H1 (cell line): ENCODE measurements at regions of chr11 and their contacts with region 1.

Region 1: GRCh38 chr11:126480410-126481302 is 125.2 kb downstream of the ST3GAL4 start:
- DNase-seq: peak; percentile 77 to 80
- H3K4me3 ChIP-seq: peak overlapping the region in 1 of 4 experiments; percentile 20; a peak in 1 of 8 replicates
- H3K27ac ChIP-seq: peak overlapping the region; percentile 72; the same call in 1 of the 2 replicates
- H3K4me1 ChIP-seq: peaks cover 0 to 6% (median 2%) of the 10 kb centered on the region in 4 experiments; a peak in 6 of 7 replicates
- H3K27me3 ChIP-seq: no peaks in the 10 kb centered on the region
- CTCF ChIP-seq: peak; percentile 59 to 94 (median 85)
- EP300 ChIP-seq: 0 out of 3 replicates have a peak, but pooled peaks of 1 of the 2 experiments have one; percentile 41
- POLR2A ChIP-seq: peak in 1 of 2 experiments; percentile 78; a peak in 2 of 3 replicates
- RAD21 ChIP-seq: peak; percentile 72 to 78

Region 2: DNA sequence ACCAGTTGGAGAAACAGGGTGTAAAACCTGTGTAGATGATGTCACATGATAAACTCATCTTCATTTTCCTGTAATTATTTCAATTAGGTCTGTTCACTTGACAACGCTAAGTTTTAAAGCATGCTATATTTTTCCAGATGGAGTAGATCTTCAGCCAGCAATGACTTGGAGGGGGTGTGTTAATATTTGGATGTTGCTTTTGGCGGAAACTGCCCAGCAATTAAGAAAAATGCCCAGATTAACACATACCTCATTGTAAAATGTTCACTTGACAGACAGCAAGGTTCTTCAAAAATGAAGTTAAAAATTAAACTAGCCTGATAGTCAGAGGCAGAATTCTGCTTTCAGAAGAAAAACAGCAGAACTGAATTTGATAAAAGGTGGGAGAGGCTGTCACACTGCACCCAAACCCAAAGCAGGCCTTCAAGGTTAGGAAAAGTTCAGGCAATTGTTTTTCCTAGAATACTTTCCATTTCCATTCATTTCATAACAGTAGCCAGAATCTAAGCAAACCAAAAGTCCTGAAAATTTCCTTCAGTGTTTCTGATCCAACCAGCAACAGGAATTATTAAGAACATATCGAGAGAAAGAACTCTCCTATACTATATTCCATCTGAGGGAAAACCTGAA is 501.8 kb before region 1 on chr11:
- CTCF ChIA-PET with region 1: no interaction called
- POLR2A ChIA-PET with region 1: no interaction called
- DNase-seq: no peak
- H3K4me3 ChIP-seq: no peak overlapping the region
- H3K27ac ChIP-seq: no peak overlapping the region
- H3K4me1 ChIP-seq: peaks cover 0 to 3% (median 0%) of the 10 kb centered on the region in 4 experiments; a peak in 2 of 7 replicates
- H3K27me3 ChIP-seq: no peaks in the 10 kb centered on the region
- CTCF ChIP-seq: no peak
- EP300 ChIP-seq: no peak
- POLR2A ChIP-seq: no peak
- RAD21 ChIP-seq: no peak

Region 3: DNA sequence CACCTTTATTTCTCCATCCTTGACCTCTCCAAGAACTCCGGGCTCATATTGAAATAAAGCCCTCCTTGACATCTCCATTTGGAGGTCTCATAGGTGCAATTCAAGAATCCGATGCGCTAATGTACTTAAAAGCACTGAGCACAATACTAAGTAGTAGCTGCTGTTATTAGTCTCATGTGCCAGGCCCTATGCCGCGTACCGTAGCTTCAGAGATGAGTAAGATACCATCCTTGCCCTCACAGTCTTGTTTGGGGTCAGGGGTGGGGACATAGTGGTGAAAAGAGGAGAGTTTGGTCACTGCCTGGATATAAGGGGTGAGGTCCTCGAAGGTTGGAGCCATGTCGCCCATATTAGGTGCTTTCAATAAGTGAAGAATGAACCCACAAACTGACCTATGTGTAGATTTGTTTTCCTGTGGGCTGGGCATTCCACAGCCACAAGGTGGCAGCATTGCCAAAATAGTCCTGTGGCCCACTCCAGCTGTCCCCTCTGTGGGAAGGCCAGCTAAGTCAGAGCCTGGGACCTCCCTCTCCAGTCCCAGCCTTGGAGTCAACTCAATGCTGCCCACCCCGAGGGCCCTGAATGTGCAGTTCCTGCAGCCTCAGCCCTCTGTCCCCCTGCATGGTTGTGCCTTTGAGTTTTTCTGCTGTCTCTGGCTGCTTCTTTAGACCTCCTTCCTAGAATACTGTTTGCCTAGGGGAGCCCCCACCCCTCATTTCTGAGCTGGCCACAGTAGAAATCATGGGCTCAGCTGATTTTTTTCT is 170.2 kb before region 1 on chr11:
- CTCF ChIA-PET with region 1: interaction called, 24 read pairs
- POLR2A ChIA-PET with region 1: no interaction called
- DNase-seq: peak; percentile 47 to 82
- H3K4me3 ChIP-seq: no peak overlapping the region
- H3K27ac ChIP-seq: no peak overlapping the region
- H3K4me1 ChIP-seq: no peaks in the 10 kb centered on the region
- H3K27me3 ChIP-seq: no peaks in the 10 kb centered on the region
- CTCF ChIP-seq: peak; percentile 78 to 88 (median 85)
- EP300 ChIP-seq: no peak
- POLR2A ChIP-seq: no peak
- RAD21 ChIP-seq: peak; percentile 92 to 93

Region 4: DNA sequence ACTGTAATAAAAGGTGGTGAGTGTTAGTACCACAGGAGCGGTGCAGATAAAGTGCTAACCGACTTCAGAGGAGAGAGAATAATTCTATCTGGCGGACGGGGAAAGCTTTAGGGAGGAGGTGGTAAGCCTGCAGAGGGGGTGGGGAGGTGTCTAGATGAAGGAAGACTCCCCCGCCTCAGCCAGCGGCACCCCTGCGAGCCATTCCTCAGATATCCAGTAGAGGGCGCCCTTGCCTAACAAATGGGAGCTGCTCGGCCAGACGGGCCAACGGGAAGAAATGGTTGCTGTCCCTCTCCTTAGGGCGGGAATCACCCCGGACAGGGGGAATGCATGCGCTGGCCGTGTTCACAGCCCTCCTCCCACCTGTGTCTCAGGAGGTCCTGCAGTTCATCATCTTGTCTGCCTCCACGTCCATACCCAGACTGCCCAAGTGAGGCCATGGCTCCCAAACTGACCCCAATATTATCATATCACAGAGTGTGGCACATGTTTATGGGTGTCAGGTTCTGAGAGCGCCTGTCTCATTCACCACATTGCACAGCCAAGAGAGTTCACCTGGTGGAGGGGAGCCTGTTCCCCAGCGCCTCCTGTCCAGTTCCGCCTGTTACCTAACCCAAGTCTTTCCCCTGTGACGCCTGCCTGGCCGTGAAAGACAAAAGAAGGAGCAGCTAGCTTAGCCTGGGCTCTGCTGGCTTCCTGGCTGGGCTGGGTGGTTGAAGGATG is 39.7 kb before region 1 on chr11:
- CTCF ChIA-PET with region 1: interaction called, 54 read pairs
- POLR2A ChIA-PET with region 1: interaction called, 3 read pairs
- DNase-seq: peak; percentile 64 to 98
- H3K4me3 ChIP-seq: peak overlapping the region in 1 of 4 experiments; percentile 13; a peak in 1 of 8 replicates
- H3K27ac ChIP-seq: no peak overlapping the region
- H3K4me1 ChIP-seq: peaks cover 4 to 11% (median 8%) of the 10 kb centered on the region in 4 experiments; a peak in 5 of 7 replicates
- H3K27me3 ChIP-seq: no peaks in the 10 kb centered on the region
- CTCF ChIP-seq: peak; percentile 91 to 96 (median 93)
- EP300 ChIP-seq: no peak
- POLR2A ChIP-seq: no peak
- RAD21 ChIP-seq: peak; percentile 100

Region 5: DNA sequence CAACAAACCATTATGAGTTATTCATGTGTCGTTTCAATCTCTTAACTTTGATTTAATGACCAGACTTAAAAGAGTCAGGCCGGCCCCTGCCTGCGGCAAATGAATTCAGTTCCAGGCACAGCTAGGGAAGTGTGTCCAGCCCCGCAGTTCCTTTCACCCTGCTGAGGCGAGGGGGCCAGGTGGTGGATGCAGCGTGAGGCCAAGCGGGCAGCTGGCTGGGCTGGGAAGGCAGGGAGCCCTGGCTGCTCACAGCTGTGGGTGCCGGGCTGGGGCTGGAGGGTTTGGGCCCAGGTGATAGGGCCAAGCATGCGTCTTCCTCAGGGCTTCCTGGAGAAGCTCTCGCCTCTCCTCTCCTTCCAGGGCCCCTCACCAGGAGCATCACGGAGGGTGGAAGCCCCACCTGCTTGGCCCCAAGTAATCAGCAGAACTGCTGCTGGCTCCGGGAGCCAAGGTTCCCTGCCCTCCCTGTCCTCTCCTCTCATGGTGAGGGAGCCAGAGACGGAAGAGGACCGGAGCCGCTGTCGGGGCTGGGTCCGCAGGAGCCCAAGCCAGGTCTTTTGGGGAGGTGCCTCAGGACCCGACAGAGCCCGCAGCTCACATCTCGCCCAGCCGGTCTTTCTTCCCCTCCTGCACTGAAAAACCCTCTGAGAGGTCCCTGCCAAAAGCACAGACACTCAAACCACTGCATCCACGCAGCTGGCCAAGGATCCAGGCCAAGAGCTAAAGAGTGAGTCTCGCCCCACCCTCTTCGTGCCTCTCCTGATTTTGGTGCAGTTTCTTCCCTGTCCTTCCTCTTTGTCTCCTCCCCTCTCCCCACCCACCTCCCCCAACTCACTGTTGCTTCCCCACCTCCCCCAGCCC is 28.2 kb before region 1 on chr11:
- CTCF ChIA-PET with region 1: interaction called, 25 read pairs
- POLR2A ChIA-PET with region 1: interaction called, 3 read pairs
- DNase-seq: no peak
- H3K4me3 ChIP-seq: no peak overlapping the region
- H3K27ac ChIP-seq: no peak overlapping the region
- H3K4me1 ChIP-seq: peaks cover 0 to 6% (median 0%) of the 10 kb centered on the region in 4 experiments; a peak in 1 of 7 replicates
- H3K27me3 ChIP-seq: no peaks in the 10 kb centered on the region
- CTCF ChIP-seq: no peak
- EP300 ChIP-seq: no peak
- POLR2A ChIP-seq: no peak
- RAD21 ChIP-seq: no peak

Region 6: DNA sequence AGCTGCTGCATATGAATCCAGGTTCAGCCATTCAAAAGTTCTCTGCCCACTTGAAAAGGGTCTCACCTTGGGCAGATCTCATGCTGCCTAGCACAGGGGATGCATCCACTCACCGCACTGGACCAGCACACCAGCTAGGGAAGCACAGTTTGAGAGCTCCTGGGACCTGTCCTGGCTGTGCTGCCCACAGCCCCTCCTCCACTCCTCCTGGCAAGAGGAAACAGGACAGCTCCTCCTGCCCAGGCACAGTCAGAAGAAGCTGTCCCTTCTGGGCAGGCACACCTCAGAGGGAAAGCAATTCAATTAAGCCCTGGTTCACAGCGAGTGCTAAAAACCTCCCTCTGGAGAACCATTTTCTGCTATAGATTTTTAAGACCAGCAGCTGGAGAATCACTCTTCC is 21.5 kb after region 1 on chr11:
- CTCF ChIA-PET with region 1: interaction called, 18 read pairs
- POLR2A ChIA-PET with region 1: interaction called, 4 read pairs
- DNase-seq: no peak
- H3K4me3 ChIP-seq: no peak overlapping the region
- H3K27ac ChIP-seq: no peak overlapping the region
- H3K4me1 ChIP-seq: peaks cover 2 to 22% (median 6%) of the 10 kb centered on the region in 4 experiments
- H3K27me3 ChIP-seq: no peaks in the 10 kb centered on the region
- CTCF ChIP-seq: no peak
- EP300 ChIP-seq: no peak
- POLR2A ChIP-seq: no peak
- RAD21 ChIP-seq: no peak

Region 7: GRCh38 chr11:126573325-126574076 is 92.8 kb after region 1 on chr11:
- CTCF ChIA-PET with region 1: interaction called, 12 read pairs
- POLR2A ChIA-PET with region 1: no interaction called
- DNase-seq: no peak
- H3K4me3 ChIP-seq: no peak overlapping the region
- H3K27ac ChIP-seq: no peak overlapping the region
- H3K4me1 ChIP-seq: peaks cover 0 to 5% (median 2%) of the 10 kb centered on the region in 4 experiments; a peak in 3 of 7 replicates
- H3K27me3 ChIP-seq: no peaks in the 10 kb centered on the region
- CTCF ChIP-seq: peak; percentile 51 to 66 (median 65)
- EP300 ChIP-seq: no peak
- POLR2A ChIP-seq: no peak
- RAD21 ChIP-seq: peak; percentile 78 to 86

Region 8: GRCh38 chr11:126628790-126629621 is 148.3 kb after region 1 on chr11:
- CTCF ChIA-PET with region 1: no interaction called
- POLR2A ChIA-PET with region 1: no interaction called
- DNase-seq: no peak
- H3K4me3 ChIP-seq: no peak overlapping the region
- H3K27ac ChIP-seq: no peak overlapping the region
- H3K4me1 ChIP-seq: no peaks in the 10 kb centered on the region; a peak in 3 of 7 replicates
- H3K27me3 ChIP-seq: peaks cover 0 to 3% (median 0%) of the 10 kb centered on the region in 4 experiments; a peak in 1 of 7 replicates
- CTCF ChIP-seq: peak in 2 of 3 experiments; percentile 6 to 13; a peak in 2 of 4 replicates
- EP300 ChIP-seq: no peak
- POLR2A ChIP-seq: no peak
- RAD21 ChIP-seq: peak in 1 of 2 experiments; percentile 10; a peak in 1 of 4 replicates